ENCODE measurements at regions of chr12 and their contacts with region 1.

Region 1: DNA sequence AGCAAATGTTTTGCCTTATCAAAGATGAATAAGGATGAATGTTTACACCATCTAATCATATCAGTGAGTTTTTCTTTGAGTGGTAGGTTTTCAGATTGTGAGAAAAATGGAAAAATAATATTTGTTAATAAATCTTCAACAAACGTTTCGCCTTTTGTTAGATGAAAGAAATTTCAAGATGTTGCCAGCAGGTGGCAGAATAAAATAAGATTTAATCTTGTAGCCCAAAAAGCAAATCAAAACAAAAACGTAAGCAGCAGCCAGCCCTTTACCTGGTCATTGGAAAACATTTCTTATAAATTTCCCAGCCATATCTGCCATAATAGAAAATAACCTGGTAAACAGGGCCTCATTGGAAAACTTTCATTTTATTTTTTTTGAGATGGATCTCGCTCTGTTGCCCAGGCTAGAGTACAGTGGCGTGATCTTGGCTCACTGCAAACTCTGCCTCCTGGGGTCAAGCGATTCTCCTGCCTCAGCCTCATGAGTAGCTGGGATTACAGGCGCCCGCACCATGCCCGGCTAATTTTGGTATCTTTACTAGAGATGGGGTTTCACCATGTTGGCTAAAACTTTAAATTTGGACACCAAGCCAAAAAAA is 15.4 kb upstream of the TMEM120B start:
- DNase-seq: peak; percentile 74
- ATAC-seq: peak; percentile 47
- H3K4me3 ChIP-seq: no peak overlapping the region
- H3K4me3 Mint-ChIP-seq: no peak overlapping the region
- H3K27ac ChIP-seq: no peak overlapping the region
- H3K27ac Mint-ChIP-seq: no peak overlapping the region
- H3K4me1 ChIP-seq: peaks cover 0 to 4% of the 10 kb centered on the region in 2 donors
- H3K4me1 Mint-ChIP-seq: peaks cover 2% of the 10 kb centered on the region
- H3K27me3 ChIP-seq: no peaks in the 10 kb centered on the region
- H3K27me3 Mint-ChIP-seq: no peaks in the 10 kb centered on the region
- CTCF ChIP-seq: peak; percentile 77

Region 2: GRCh38 chr12:121560392-121561008 is 136.7 kb before region 1 on chr12:
- CTCF ChIA-PET with region 1: no interaction called
- POLR2A ChIA-PET with region 1: interaction called, 15 read pairs
- intact Hi-C with region 1: no loop called
- DNase-seq: peak; percentile 90
- ATAC-seq: peak; percentile 78
- H3K4me3 ChIP-seq: no peak overlapping the region
- H3K4me3 Mint-ChIP-seq: peak overlapping the region; percentile 53
- H3K27ac ChIP-seq: peak overlapping the region; percentile 58
- H3K27ac Mint-ChIP-seq: peak overlapping the region; percentile 91
- H3K4me1 ChIP-seq: peaks cover 29 to 48% of the 10 kb centered on the region in 2 donors
- H3K4me1 Mint-ChIP-seq: peaks cover 40% of the 10 kb centered on the region
- H3K27me3 ChIP-seq: no peaks in the 10 kb centered on the region
- H3K27me3 Mint-ChIP-seq: no peaks in the 10 kb centered on the region
- CTCF ChIP-seq: no peak

Region 3: GRCh38 chr12:121712461-121713256 is 15.5 kb after region 1 on chr12 and contains the start of gene TMEM120B:
- CTCF ChIA-PET with region 1: interaction called, 9 read pairs
- POLR2A ChIA-PET with region 1: no interaction called
- intact Hi-C with region 1: loop called (anchors 1 kb)
- DNase-seq: peak; percentile 93
- ATAC-seq: peak; percentile 92
- H3K4me3 ChIP-seq: peak within 1 kb of the TSS; percentile 84 to 97 (median 89)
- H3K4me3 Mint-ChIP-seq: peak within 1 kb of the TSS; percentile 92
- H3K27ac ChIP-seq: peak within 1 kb of the TSS; percentile 48 to 63
- H3K27ac Mint-ChIP-seq: peak within 1 kb of the TSS; percentile 89
- H3K4me1 ChIP-seq: peaks cover 22 to 28% of the 10 kb centered on the region in 2 donors
- H3K4me1 Mint-ChIP-seq: peaks cover 25% of the 10 kb centered on the region
- H3K27me3 ChIP-seq: no peaks in the 10 kb centered on the region
- H3K27me3 Mint-ChIP-seq: no peaks in the 10 kb centered on the region
- CTCF ChIP-seq: no peak
- total RNA-seq, gene TMEM120B: 9.2 and 11.5 TPM in 2 replicates

Region 4: GRCh38 chr12:121773011-121773777 is 76.0 kb after region 1 on chr12:
- CTCF ChIA-PET with region 1: interaction called, 75 read pairs
- POLR2A ChIA-PET with region 1: no interaction called
- intact Hi-C with region 1: loop called (anchors 1 kb)
- DNase-seq: peak; percentile 87
- ATAC-seq: peak; percentile 96
- H3K4me3 ChIP-seq: no peak overlapping the region
- H3K4me3 Mint-ChIP-seq: no peak overlapping the region
- H3K27ac ChIP-seq: no peak overlapping the region
- H3K27ac Mint-ChIP-seq: peak overlapping the region; percentile 82
- H3K4me1 ChIP-seq: peaks cover 15 to 25% of the 10 kb centered on the region in 2 donors
- H3K4me1 Mint-ChIP-seq: peaks cover 16% of the 10 kb centered on the region
- H3K27me3 ChIP-seq: no peaks in the 10 kb centered on the region
- H3K27me3 Mint-ChIP-seq: no peaks in the 10 kb centered on the region
- CTCF ChIP-seq: peak; percentile 87

Region 5: DNA sequence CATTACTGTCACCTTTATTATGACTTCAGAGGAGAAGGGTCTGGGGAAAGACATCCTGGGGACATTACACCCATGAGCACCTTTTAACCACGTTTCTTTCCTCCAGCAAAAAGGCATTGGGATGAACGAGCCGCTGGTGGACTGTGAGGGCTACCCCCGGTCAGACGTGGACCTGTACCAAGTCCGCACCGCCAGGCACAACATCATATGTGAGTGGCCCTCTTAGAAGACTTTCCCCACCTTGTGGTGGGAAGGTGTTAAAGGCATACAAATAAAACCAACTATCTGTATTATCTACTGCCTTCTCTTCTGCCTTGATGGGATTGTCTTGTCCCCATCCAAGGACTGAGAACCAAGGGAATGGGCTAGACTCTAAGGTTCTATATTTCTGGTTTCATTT is 197.4 kb after region 1 on chr12:
- CTCF ChIA-PET with region 1: no interaction called
- POLR2A ChIA-PET with region 1: no interaction called
- intact Hi-C with region 1: loop called (anchors 1 kb)
- DNase-seq: peak; percentile 25
- ATAC-seq: no peak
- H3K4me3 ChIP-seq: no peak overlapping the region
- H3K4me3 Mint-ChIP-seq: no peak overlapping the region
- H3K27ac ChIP-seq: no peak overlapping the region
- H3K27ac Mint-ChIP-seq: no peak overlapping the region
- H3K4me1 ChIP-seq: peaks cover 5 to 6% of the 10 kb centered on the region in 2 donors
- H3K4me1 Mint-ChIP-seq: peaks cover 16% of the 10 kb centered on the region
- H3K27me3 ChIP-seq: no peaks in the 10 kb centered on the region
- H3K27me3 Mint-ChIP-seq: no peaks in the 10 kb centered on the region
- CTCF ChIP-seq: no peak

Region 6: DNA sequence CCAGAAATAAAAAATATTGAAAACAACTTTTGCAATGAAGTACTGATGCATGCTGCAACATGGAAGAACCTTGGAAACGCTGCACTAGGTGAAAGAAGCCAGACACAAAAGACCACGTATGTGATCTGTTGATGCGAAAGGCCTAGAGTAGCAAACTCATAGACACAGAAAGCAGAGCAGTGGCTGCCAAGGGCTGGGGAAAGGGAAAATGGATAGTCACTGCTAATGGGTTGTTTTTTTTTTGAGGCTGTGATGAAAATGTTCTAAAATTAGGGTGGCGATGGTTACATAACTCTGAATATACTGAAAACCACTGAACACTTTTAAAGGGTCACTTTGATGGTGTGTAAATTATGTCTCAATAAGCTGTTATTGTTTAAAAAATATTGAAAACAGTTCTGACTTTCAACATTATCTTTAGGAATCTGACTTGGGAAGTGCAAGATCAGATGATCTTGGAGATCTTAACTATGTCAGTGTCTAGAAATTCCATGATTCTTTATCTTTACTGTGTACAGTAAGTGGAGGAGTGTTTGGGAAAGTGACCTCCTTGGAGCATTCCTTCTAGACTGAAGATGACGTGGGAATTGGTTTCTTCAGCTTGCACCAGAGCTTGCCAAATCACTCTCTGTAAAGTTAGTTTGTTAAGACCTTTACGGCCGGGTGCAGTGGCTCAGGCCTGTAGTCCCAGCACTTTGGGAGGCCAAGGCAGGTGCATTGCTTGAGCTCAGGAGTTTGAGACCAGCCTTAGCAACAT is 393.7 kb after region 1 on chr12:
- CTCF ChIA-PET with region 1: no interaction called
- POLR2A ChIA-PET with region 1: no interaction called
- intact Hi-C with region 1: no loop called
- DNase-seq: no peak
- ATAC-seq: no peak
- H3K4me3 ChIP-seq: no peak overlapping the region
- H3K4me3 Mint-ChIP-seq: no peak overlapping the region
- H3K27ac ChIP-seq: no peak overlapping the region
- H3K27ac Mint-ChIP-seq: peak overlapping the region; percentile 42
- H3K4me1 ChIP-seq: peaks cover 26 to 33% of the 10 kb centered on the region in 2 donors
- H3K4me1 Mint-ChIP-seq: peaks cover 48% of the 10 kb centered on the region
- H3K27me3 ChIP-seq: no peaks in the 10 kb centered on the region
- H3K27me3 Mint-ChIP-seq: no peaks in the 10 kb centered on the region
- CTCF ChIP-seq: no peak